ENCODE measurements at regions of chr2 and their contacts with region 1.

Region 1: DNA sequence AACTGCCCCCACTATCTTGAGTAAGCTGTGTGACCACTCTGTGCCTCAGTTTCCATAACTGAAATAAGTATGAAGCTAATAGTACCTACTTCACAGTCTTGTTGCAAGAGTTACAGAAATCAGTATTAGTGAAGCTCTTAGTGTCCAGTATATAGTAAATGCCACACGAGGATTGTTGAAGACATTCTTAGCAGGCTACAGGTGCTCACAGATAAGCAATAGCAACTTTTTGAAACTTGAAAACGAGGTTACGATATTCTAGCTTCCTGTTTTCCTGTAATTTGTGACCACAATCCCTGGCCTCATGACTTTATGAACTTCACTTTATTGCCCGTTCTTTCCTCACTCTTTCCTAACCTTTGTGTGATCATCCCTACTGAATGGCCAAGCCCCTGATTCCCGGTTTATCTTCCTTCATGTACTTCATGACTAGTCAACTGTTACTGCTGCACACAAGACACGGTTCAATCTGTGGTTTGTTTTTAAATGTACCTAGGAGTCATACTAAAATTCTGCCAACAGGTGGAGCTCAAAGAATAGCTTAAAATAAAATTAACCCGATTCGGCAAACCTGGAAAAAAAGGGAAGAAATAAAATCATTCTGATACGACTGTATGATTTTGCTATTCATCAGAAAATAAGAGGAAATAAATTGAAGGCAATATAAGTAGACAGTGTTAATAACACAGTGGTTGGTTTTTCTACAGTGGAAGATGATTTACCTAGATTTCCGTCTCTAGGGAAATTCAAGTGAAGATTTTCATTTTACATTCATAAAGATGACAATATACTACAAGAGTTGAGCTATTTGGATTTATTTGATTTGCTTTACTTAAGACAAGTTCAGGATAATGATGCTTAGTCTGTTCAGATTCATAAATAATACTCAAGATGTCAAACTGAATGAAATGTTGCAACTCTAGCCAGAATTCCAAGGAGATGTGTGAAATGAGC is 38.1 kb upstream of the STAT1 start:
- DNase-seq: no peak
- ATAC-seq: peak; percentile 72
- H3K4me3 Mint-ChIP-seq: no peak overlapping the region
- H3K27ac Mint-ChIP-seq: no peak overlapping the region
- H3K4me1 Mint-ChIP-seq: peaks cover 21% of the 10 kb centered on the region
- H3K27me3 Mint-ChIP-seq: no peaks in the 10 kb centered on the region
- CTCF ChIP-seq: peak; percentile 94

Region 2: GRCh38 chr2:191020221-191020741 is 31.8 kb before region 1 on chr2:
- CTCF ChIA-PET with region 1: interaction called, 10 read pairs
- POLR2A ChIA-PET with region 1: interaction called, 5 read pairs
- intact Hi-C with region 1: no loop called
- DNase-seq: peak; percentile 95
- ATAC-seq: peak; percentile 64
- H3K4me3 Mint-ChIP-seq: no peak overlapping the region
- H3K27ac Mint-ChIP-seq: no peak overlapping the region
- H3K4me1 Mint-ChIP-seq: peaks cover 33% of the 10 kb centered on the region
- H3K27me3 Mint-ChIP-seq: no peaks in the 10 kb centered on the region
- CTCF ChIP-seq: no peak

Region 3: DNA sequence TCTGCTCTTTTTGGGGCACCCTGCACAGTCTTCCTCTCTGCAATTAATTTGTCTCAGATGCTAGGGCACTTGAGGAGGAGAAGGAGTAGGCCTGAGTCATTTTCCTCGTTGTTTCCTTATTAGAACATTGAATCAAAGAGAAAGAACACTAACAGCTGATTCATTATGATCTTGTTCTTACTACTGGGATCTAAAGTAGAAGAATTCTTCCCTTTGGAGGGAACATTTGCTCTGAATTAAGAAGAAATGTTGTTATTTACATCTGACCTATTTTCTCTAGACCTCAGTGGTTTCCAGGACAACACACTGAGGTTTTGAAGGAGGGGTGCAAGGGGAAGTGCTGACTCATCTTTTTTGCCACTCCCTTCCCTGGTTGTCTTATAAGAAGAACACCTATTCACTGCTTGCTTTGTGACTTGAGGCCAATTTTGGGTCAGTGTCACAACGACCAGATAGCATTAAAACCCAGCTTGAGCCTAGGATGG is 13.8 kb before region 1 on chr2:
- CTCF ChIA-PET with region 1: interaction called, 35 read pairs
- POLR2A ChIA-PET with region 1: interaction called, 8 read pairs
- intact Hi-C with region 1: no loop called
- DNase-seq: peak; percentile 41
- ATAC-seq: peak; percentile 67
- H3K4me3 Mint-ChIP-seq: no peak overlapping the region
- H3K27ac Mint-ChIP-seq: peak overlapping the region; percentile 76
- H3K4me1 Mint-ChIP-seq: peaks cover 29% of the 10 kb centered on the region
- H3K27me3 Mint-ChIP-seq: no peaks in the 10 kb centered on the region
- CTCF ChIP-seq: no peak

Region 4: GRCh38 chr2:191103774-191104173 is 51.7 kb after region 1 on chr2:
- CTCF ChIA-PET with region 1: interaction called, 10 read pairs
- POLR2A ChIA-PET with region 1: interaction called, 3 read pairs
- intact Hi-C with region 1: no loop called
- DNase-seq: no peak
- ATAC-seq: peak; percentile 69
- H3K4me3 Mint-ChIP-seq: no peak overlapping the region
- H3K27ac Mint-ChIP-seq: peak overlapping the region; percentile 57
- H3K4me1 Mint-ChIP-seq: peaks cover 79% of the 10 kb centered on the region
- H3K27me3 Mint-ChIP-seq: no peaks in the 10 kb centered on the region
- CTCF ChIP-seq: no peak

Region 5: GRCh38 chr2:191128172-191128910 is 76.2 kb after region 1 on chr2:
- CTCF ChIA-PET with region 1: interaction called, 21 read pairs
- POLR2A ChIA-PET with region 1: no interaction called
- intact Hi-C with region 1: no loop called
- DNase-seq: no peak
- ATAC-seq: peak; percentile 84
- H3K4me3 Mint-ChIP-seq: peak overlapping the region; percentile 65
- H3K27ac Mint-ChIP-seq: peak overlapping the region; percentile 82
- H3K4me1 Mint-ChIP-seq: peaks cover 72% of the 10 kb centered on the region
- H3K27me3 Mint-ChIP-seq: no peaks in the 10 kb centered on the region
- CTCF ChIP-seq: no peak

Region 6: GRCh38 chr2:191521608-191522208 is 469.6 kb after region 1 on chr2:
- CTCF ChIA-PET with region 1: interaction called, 7 read pairs
- POLR2A ChIA-PET with region 1: no interaction called
- intact Hi-C with region 1: loop called (anchors 10 kb)
- DNase-seq: no peak
- ATAC-seq: peak; percentile 56
- H3K4me3 Mint-ChIP-seq: no peak overlapping the region
- H3K27ac Mint-ChIP-seq: no peak overlapping the region
- H3K4me1 Mint-ChIP-seq: no peaks in the 10 kb centered on the region
- H3K27me3 Mint-ChIP-seq: no peaks in the 10 kb centered on the region
- CTCF ChIP-seq: peak; percentile 70

Measured in activated CD8-positive, alpha-beta T cell treated with anti-CD3 and anti-CD28 coated beads for 36 hours (primary cell).